ENCODE measurements at regions of chr3 and their contacts with region 1.

Region 1: GRCh38 chr3:52154117-52155094 is at the start of gene POC1A:
- DNase-seq: peak; percentile 98
- ATAC-seq: peak; percentile 98
- total RNA-seq, gene POC1A: 1.7 TPM

Region 2: GRCh38 chr3:52041118-52041731 is 113.2 kb before region 1 on chr3:
- intact Hi-C with region 1: no loop called
- DNase-seq: no peak
- ATAC-seq: peak; percentile 37

Region 3: GRCh38 chr3:52197842-52198668 is 43.6 kb after region 1 on chr3 and contains the start of gene ALAS1:
- intact Hi-C with region 1: loop called (anchors 5 kb)
- DNase-seq: peak; percentile 97
- ATAC-seq: peak; percentile 87
- total RNA-seq, gene ALAS1: 186 TPM

Region 4: GRCh38 chr3:52216585-52217408 is 62.4 kb after region 1 on chr3:
- intact Hi-C with region 1: loop called (anchors 2 kb)
- DNase-seq: no peak
- ATAC-seq: peak; percentile 61

Region 5: DNA sequence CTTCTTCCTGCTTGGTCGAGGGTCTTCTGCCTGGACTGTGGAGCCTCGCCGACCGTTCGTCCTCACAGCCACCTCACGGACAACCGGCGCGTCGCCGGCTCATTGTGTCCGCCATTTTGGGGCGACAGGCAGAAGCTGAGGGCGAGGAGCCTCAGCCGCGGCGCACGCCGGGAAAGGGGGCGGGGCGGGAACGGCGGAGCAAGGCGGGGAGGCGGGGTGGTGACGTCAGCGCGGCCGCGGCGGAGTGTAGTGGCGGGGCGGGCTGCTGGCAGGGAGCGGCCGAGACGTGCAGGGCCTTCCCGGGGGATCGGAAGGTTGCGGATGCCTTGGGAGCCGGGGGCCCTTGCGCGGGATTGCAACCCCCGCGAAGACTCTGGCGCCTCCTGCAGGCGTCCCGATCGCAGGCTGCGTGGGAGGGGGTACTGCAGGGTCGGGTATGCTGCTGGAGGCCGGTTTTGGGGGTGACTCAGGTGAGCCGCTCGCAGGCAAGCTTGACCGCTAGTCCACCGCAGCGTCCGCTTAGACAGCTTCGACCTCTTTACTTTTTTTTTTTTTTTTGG is 124.2 kb after region 1 on chr3 and contains the start of gene WDR82:
- intact Hi-C with region 1: loop called (anchors 2 kb)
- DNase-seq: peak; percentile 99
- ATAC-seq: peak; percentile 98
- total RNA-seq, gene WDR82: 62.3 TPM

Measured in Right ventricle myocardium inferior (tissue), 1 donor.